ENCODE measurements at regions of chr2 and their contacts with region 1.

Region 1: GRCh38 chr2:53473248-53473647 is 294.4 kb upstream of the CHAC2 start:
- DNase-seq: peak; percentile 13
- ATAC-seq: peak; percentile 94
- H3K4me3 ChIP-seq: no peak overlapping the region
- H3K27ac ChIP-seq: no peak overlapping the region
- H3K4me1 ChIP-seq: no peaks in the 10 kb centered on the region
- H3K27me3 ChIP-seq: no peaks in the 10 kb centered on the region
- CTCF ChIP-seq: peak; percentile 66
- EP300 ChIP-seq: no peak
- POLR2A ChIP-seq: no peak
- RAD21 ChIP-seq: no peak

Region 2: GRCh38 chr2:52416340-52416739 is 1056.9 kb before region 1 on chr2:
- CTCF ChIA-PET with region 1: no interaction called
- POLR2A ChIA-PET with region 1: no interaction called
- in situ Hi-C with region 1: no loop called
- intact Hi-C with region 1: loop called (anchors 10 kb)
- DNase-seq: no peak
- ATAC-seq: no peak
- H3K4me3 ChIP-seq: no peak overlapping the region
- H3K27ac ChIP-seq: no peak overlapping the region
- H3K4me1 ChIP-seq: no peaks in the 10 kb centered on the region
- H3K27me3 ChIP-seq: no peaks in the 10 kb centered on the region
- CTCF ChIP-seq: no peak
- EP300 ChIP-seq: no peak
- POLR2A ChIP-seq: no peak
- RAD21 ChIP-seq: no peak

Region 3: DNA sequence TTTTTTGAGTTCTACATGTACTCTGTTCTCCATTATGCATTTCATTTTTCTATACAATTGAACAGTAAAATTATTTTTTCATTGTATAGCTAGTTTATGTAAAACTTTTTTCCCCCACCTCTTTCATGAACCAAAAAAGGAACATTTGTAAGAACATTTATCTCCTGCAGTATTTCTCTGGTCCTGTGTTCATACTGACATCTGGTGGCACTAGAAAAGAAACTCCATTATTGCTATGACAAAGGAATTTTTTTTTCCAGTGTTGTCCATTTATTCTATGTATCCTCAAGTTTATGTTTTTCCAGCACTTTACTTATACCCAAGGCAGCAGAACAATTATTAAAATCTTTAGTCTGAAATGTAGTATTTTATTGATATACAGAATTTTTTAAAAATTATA is 266.9 kb after region 1 on chr2:
- CTCF ChIA-PET with region 1: no interaction called
- POLR2A ChIA-PET with region 1: no interaction called
- in situ Hi-C with region 1: no loop called
- intact Hi-C with region 1: no loop called
- DNase-seq: peak; percentile 40
- ATAC-seq: no peak
- H3K4me3 ChIP-seq: no peak overlapping the region
- H3K27ac ChIP-seq: no peak overlapping the region
- H3K4me1 ChIP-seq: peaks cover 8% of the 10 kb centered on the region; the same call in 1 of the 2 replicates
- H3K27me3 ChIP-seq: no peaks in the 10 kb centered on the region
- CTCF ChIP-seq: peak; percentile 46
- EP300 ChIP-seq: no peak
- POLR2A ChIP-seq: no peak
- RAD21 ChIP-seq: no peak

Region 4: DNA sequence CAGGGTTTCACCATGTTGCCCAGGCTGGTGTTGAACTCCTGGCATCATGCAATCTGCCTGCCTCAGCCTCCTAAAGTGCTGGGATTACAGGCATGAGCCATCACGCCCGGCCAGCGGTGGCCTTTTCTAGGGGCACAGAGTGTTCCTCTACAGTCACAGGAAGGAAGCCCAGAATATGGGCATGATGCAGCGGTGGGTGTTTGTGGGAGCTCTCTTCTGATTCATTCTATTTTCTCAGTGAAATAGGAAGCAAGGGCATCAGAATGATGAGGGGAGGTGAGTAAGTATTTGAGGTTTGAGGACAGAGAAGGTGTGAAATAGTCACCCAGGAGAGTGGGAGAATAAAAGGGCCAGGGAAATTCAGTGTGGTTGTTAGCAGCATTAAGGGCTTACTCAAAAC is 567.9 kb after region 1 on chr2:
- CTCF ChIA-PET with region 1: no interaction called
- POLR2A ChIA-PET with region 1: no interaction called
- in situ Hi-C with region 1: no loop called
- intact Hi-C with region 1: no loop called
- DNase-seq: no peak
- ATAC-seq: no peak
- H3K4me3 ChIP-seq: no peak overlapping the region
- H3K27ac ChIP-seq: no peak overlapping the region
- H3K4me1 ChIP-seq: peaks cover 28% of the 10 kb centered on the region
- H3K27me3 ChIP-seq: no peaks in the 10 kb centered on the region
- CTCF ChIP-seq: no peak
- EP300 ChIP-seq: no peak
- POLR2A ChIP-seq: no peak
- RAD21 ChIP-seq: no peak